ENCODE measurements at regions of chr4 and their contacts with region 1.

Region 1: GRCh38 chr4:139295206-139295941 is 5.9 kb upstream of the NAA15 start:
- DNase-seq: peak; percentile 97 to 99 (median 98)
- ATAC-seq: peak; percentile 95 to 99 (median 97)
- H3K4me3 ChIP-seq: peak overlapping the region; percentile 74 to 83 (median 77)
- H3K27ac ChIP-seq: peak overlapping the region; percentile 87 to 92 (median 92)
- H3K4me1 ChIP-seq: peaks cover 0 to 31% (median 2%) of the 10 kb centered on the region in 4 donors
- H3K27me3 ChIP-seq: no peaks in the 10 kb centered on the region
- CTCF ChIP-seq: peak; percentile 93 to 99 (median 98)
- POLR2A ChIP-seq: peak; percentile 78

Region 2: DNA sequence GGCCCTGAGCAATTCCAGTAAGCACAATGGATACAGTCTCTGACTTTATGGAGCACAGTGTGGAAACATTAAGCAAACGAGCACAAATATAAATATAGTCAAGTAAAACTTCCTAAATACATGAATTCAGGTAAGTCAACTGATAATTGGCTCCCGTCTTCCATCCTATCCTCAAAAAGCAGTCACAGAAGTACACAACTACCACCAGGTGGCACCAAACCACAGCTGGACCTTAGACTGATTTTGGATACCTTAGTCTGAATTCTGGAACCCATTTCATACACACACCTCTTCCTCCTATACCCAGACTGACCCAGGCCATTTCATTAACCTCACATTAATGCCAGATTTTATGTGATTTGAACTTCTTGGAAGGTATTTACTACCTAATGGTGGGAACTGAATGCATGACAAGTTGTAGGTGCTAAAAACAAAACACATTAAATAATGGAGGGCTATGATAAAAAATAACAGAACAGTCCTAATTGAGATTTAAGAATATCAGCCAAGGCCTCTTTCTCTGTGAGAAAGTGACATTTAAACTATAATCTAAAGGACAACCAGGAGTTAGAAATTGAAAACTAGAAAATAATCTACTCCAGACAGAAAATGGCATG is 195.9 kb before region 1 on chr4:
- intact Hi-C with region 1: loop called in 1 of 2 experiments (anchors 10 kb)
- DNase-seq: peak in 2 of 3 donors; percentile 52 to 74
- ATAC-seq: peak; percentile 94 to 99 (median 98)
- H3K4me3 ChIP-seq: no peak overlapping the region
- H3K27ac ChIP-seq: no peak overlapping the region
- H3K4me1 ChIP-seq: no peaks in the 10 kb centered on the region
- H3K27me3 ChIP-seq: no peaks in the 10 kb centered on the region
- CTCF ChIP-seq: peak; percentile 83 to 89 (median 86)
- POLR2A ChIP-seq: no peak

Region 3: GRCh38 chr4:139392797-139393196 is 97.4 kb after region 1 on chr4:
- intact Hi-C with region 1: no loop called
- DNase-seq: no peak
- ATAC-seq: no peak
- H3K4me3 ChIP-seq: no peak overlapping the region
- H3K27ac ChIP-seq: no peak overlapping the region
- H3K4me1 ChIP-seq: peaks cover 0 to 7% (median 0%) of the 10 kb centered on the region in 4 donors
- H3K27me3 ChIP-seq: no peaks in the 10 kb centered on the region
- CTCF ChIP-seq: no peak
- POLR2A ChIP-seq: no peak

Measured in right lobe of liver (tissue), 6 donors.